ENCODE measurements at regions of chr2 and their contacts with region 1.

Region 1: DNA sequence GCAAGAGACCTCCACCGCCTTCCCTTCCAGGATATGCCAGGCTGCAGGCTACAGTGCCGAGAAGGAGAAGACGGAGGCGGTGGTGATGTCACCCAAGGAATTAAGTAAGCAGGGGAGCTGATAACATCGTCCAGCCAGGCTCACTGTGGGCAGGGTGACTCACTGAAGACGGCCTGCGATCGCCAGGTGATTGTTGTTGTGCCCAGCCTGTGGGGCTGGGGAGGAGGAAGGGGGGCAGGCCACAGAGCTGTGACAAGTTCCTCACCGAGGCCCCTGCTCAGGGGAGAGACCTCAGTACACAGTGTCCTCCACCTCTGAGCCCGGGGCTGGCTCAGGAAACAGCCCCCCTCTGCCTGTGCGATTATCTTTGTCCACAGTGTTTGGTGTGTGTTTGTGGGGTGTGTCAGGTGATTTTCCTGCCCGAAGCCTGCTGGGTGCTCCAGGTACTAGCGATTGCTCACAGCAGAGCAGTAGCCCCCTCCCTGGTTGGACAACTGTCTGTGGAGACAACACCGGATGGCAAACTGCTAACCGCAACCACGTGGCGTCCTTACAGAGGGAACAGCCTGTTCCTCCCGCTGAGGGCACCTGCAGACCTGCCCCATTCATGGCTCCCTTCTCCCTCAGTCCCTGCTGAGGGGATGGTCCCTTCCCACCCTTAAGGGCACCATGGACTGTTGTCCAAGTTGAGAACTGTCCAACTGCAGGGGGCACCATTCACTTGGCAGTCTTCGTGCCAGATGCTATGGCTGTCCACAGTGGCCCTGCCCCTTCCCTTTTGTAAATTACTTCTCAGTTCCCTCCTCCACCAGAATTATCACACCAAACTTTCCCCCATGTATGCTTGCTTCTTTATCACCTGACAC is 95.1 kb downstream of the ZFP36L2 start:
- DNase-seq: peak; percentile 95
- ATAC-seq: peak; percentile 50
- H3K4me3 Mint-ChIP-seq: peak overlapping the region; percentile 39
- H3K27ac Mint-ChIP-seq: peak overlapping the region; percentile 95
- H3K4me1 Mint-ChIP-seq: peaks cover 85% of the 10 kb centered on the region
- H3K27me3 Mint-ChIP-seq: no peaks in the 10 kb centered on the region
- CTCF ChIP-seq: peak; percentile 70

Region 2: DNA sequence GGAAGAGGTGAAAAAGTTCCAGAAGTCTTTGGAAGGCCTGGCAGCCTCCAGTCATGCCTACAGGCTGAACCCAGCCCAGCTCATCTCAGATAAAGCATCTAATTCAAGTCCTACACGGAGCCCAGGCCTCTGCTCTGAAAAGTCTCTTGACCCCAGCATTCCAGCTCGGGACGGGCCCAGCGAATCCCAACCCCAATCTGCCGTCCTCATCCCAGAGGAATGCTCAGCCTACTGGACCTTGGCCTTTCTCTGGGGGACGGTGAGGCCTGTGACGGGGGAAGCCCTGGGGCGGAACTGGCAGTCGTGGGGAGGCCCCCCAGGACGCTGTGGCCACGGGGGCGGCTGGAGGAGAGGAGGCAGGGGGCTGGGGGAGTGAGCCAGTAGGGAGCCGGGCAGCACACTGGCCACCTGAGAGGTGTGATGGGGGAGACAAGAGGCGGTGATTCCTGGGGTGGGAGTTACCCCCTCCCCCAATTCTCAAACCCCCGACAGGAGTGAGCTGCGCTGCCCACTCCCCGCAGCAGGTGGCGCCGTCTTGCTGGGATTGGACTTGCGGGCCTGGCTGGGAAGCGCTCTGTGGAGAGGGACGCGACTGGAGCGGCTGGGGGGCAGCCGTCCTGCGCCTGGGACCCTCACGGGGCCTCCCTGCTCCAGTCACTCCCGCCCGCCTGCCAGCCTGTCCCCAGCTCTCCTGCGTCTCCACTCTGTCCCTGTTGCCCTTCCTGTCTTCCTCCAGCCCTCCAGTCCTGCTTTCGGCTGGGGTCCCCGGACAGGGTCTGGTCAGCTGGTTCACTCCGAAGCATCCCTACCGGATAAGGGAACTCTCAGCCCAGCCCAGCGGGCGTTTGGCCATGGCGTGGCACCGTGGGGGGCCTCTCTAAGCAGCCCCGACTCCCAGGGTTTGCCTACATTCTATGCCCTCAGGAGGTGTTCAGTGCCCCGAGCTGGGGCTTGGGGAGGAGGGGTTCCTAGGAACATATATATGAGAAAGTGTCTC is 156.2 kb before region 1 on chr2:
- CTCF ChIA-PET with region 1: interaction called, 4 read pairs
- POLR2A ChIA-PET with region 1: no interaction called
- intact Hi-C with region 1: loop called (anchors 10 kb)
- DNase-seq: peak; percentile 64
- ATAC-seq: peak; percentile 75
- H3K4me3 Mint-ChIP-seq: no peak overlapping the region
- H3K27ac Mint-ChIP-seq: no peak overlapping the region
- H3K4me1 Mint-ChIP-seq: peaks cover 16% of the 10 kb centered on the region
- H3K27me3 Mint-ChIP-seq: no peaks in the 10 kb centered on the region
- CTCF ChIP-seq: peak; percentile 85

Region 3: GRCh38 chr2:43149482-43150107 is 18.3 kb after region 1 on chr2:
- CTCF ChIA-PET with region 1: interaction called, 16 read pairs
- POLR2A ChIA-PET with region 1: interaction called, 59 read pairs
- intact Hi-C with region 1: no loop called
- DNase-seq: peak; percentile 88
- ATAC-seq: peak; percentile 94
- H3K4me3 Mint-ChIP-seq: peak overlapping the region; percentile 50
- H3K27ac Mint-ChIP-seq: peak overlapping the region; percentile 89
- H3K4me1 Mint-ChIP-seq: peaks cover 66% of the 10 kb centered on the region
- H3K27me3 Mint-ChIP-seq: no peaks in the 10 kb centered on the region
- CTCF ChIP-seq: no peak

Region 4: GRCh38 chr2:43178602-43179542 is 47.6 kb after region 1 on chr2:
- CTCF ChIA-PET with region 1: interaction called, 5 read pairs
- POLR2A ChIA-PET with region 1: interaction called, 12 read pairs
- intact Hi-C with region 1: loop called (anchors 5 kb)
- DNase-seq: no peak
- ATAC-seq: no peak
- H3K4me3 Mint-ChIP-seq: no peak overlapping the region
- H3K27ac Mint-ChIP-seq: peak overlapping the region; percentile 46
- H3K4me1 Mint-ChIP-seq: peaks cover 60% of the 10 kb centered on the region
- H3K27me3 Mint-ChIP-seq: no peaks in the 10 kb centered on the region
- CTCF ChIP-seq: no peak

Region 5: GRCh38 chr2:43426305-43427031 is 295.2 kb after region 1 on chr2:
- CTCF ChIA-PET with region 1: no interaction called
- POLR2A ChIA-PET with region 1: no interaction called
- intact Hi-C with region 1: loop called (anchors 5 kb)
- DNase-seq: peak; percentile 84
- ATAC-seq: peak; percentile 91
- H3K4me3 Mint-ChIP-seq: no peak overlapping the region
- H3K27ac Mint-ChIP-seq: peak overlapping the region; percentile 53
- H3K4me1 Mint-ChIP-seq: peaks cover 45% of the 10 kb centered on the region
- H3K27me3 Mint-ChIP-seq: no peaks in the 10 kb centered on the region
- CTCF ChIP-seq: no peak

Measured in activated CD8-positive, alpha-beta T cell treated with anti-CD3 and anti-CD28 coated beads for 36 hours (primary cell).